Panc1 (cell line): ENCODE measurements at regions of chr2 and their contacts with region 1.

Region 1: GRCh38 chr2:216698895-216699294 is 3.5 kb upstream of the IGFBP5 start:
- DNase-seq: peak; percentile 27
- ATAC-seq: peak; percentile 73
- H3K4me3 ChIP-seq: no peak overlapping the region
- H3K27ac ChIP-seq: no peak overlapping the region
- H3K4me1 ChIP-seq: peaks cover 2% of the 10 kb centered on the region
- H3K27me3 ChIP-seq: peaks cover 25% of the 10 kb centered on the region
- CTCF ChIP-seq: peak; percentile 73

Region 2: GRCh38 chr2:216666461-216667233 is 32.2 kb before region 1 on chr2:
- CTCF ChIA-PET with region 1: no interaction called
- POLR2A ChIA-PET with region 1: interaction called, 20 read pairs
- in situ Hi-C with region 1: no loop called
- intact Hi-C with region 1: no loop called
- DNase-seq: peak; percentile 68
- ATAC-seq: peak; percentile 87
- H3K4me3 ChIP-seq: no peak overlapping the region
- H3K27ac ChIP-seq: no peak overlapping the region
- H3K4me1 ChIP-seq: no peaks in the 10 kb centered on the region
- H3K27me3 ChIP-seq: no peaks in the 10 kb centered on the region
- CTCF ChIP-seq: peak; percentile 94

Region 3: GRCh38 chr2:217142649-217143266 is 443.9 kb after region 1 on chr2:
- CTCF ChIA-PET with region 1: no interaction called
- POLR2A ChIA-PET with region 1: no interaction called
- in situ Hi-C with region 1: no loop called
- intact Hi-C with region 1: loop called (anchors 10 kb)
- DNase-seq: no peak
- ATAC-seq: no peak
- H3K4me3 ChIP-seq: no peak overlapping the region
- H3K27ac ChIP-seq: no peak overlapping the region
- H3K4me1 ChIP-seq: no peaks in the 10 kb centered on the region
- H3K27me3 ChIP-seq: no peaks in the 10 kb centered on the region
- CTCF ChIP-seq: peak; percentile 78

Region 4: GRCh38 chr2:217510771-217511291 is 811.9 kb after region 1 on chr2:
- CTCF ChIA-PET with region 1: interaction called, 4 read pairs
- POLR2A ChIA-PET with region 1: no interaction called
- in situ Hi-C with region 1: no loop called
- intact Hi-C with region 1: loop called (anchors 5 kb)
- DNase-seq: peak; percentile 17
- ATAC-seq: peak; percentile 73
- H3K4me3 ChIP-seq: no peak overlapping the region
- H3K27ac ChIP-seq: no peak overlapping the region
- H3K4me1 ChIP-seq: no peaks in the 10 kb centered on the region; the same call in 1 of the 2 replicates
- H3K27me3 ChIP-seq: no peaks in the 10 kb centered on the region
- CTCF ChIP-seq: peak; percentile 71

Region 5: DNA sequence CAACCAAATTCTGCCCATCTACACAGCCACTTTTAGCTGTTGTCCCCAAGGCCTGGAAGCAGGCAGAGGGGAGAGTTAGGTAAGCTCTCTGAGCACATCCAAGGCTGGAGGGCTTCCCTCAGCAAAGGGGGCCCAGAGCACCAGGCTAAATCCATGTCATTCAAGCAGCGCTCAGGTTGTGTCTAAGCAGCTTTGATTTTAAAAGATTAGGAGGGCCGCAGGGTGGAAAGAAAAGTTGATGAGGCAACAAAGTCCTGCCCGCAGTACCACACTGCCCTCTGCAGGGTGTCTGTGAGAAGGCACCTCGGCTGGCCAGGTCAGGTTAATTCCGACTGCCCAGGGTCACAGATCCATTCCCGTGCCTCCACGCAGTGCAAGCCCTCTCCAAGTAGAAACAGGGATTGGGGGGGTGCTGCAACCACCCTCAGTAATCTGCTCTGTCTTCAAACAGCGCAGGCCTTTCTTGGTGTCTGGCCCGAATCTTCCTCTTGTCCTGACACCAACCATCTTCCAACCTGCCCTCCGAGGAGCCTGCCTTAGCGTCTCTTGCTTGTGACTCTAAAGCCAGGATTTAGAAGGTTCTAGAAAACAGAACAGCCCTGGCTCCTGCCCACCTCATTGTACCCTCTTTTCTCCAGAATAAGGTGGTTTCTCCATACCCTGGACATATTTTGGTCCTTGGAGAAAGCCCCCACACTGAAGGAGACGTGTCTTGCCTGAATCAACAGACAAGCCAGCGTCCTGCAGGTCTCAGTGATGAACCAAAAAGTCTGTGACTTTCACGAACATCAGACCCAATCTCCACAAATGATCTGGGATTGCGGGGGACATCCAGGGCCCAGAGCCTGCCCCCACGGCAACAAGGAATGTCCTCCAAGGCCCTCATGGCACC is 1014.7 kb after region 1 on chr2:
- CTCF ChIA-PET with region 1: no interaction called
- POLR2A ChIA-PET with region 1: no interaction called
- in situ Hi-C with region 1: no loop called
- intact Hi-C with region 1: loop called (anchors 5 kb)
- DNase-seq: peak; percentile 54
- ATAC-seq: peak; percentile 86
- H3K4me3 ChIP-seq: no peak overlapping the region
- H3K27ac ChIP-seq: no peak overlapping the region
- H3K4me1 ChIP-seq: no peaks in the 10 kb centered on the region
- H3K27me3 ChIP-seq: peaks cover 3% of the 10 kb centered on the region; the same call in 1 of the 2 replicates
- CTCF ChIP-seq: peak; percentile 97